Calu3 (cell line): ENCODE measurements at regions of chr1 and their contacts with region 1.

Region 1: DNA sequence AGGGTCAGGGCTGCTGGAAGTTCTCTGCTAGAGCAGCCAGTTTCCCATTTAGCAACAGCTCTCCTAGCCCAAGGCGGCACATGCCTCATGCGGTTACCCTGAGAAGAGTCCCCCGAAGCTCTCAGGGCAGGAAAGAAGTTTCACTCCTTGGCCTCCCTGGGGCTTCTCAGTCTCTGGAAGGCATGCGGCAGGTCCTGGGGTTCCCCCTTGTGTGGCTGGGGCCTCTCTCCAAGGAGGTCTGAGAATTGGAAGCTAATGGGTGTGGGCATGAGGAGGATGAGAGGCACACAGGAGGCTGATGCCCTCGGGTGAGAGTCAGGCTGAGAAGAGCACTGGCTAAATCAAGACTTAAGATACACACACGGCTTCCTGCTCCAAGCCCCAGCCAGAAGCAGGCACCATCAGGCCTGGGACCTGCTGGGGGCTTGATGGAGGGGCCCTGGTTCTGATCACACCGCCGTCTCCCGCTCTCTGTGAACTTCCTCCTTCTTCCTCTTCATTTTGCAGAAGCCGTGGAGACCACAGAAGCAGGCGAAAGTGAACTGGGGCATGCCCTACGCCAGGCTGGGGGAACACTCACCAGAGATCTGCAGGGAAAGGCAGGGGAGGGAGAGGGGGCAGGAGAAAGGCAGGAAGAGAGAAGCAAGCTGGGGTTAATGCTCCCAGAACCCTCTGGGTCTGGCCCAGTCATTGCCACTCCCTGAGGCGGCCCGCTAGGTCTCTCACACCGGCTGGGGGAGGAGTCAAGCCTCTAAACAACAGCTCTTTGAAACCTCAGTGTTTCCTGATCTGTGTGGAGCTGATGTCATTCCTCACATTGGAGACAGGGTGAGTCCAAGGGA is 15.1 kb downstream of the BLACAT1 start:
- DNase-seq: peak; percentile 96
- H3K4me3 Mint-ChIP-seq: peak overlapping the region; percentile 36
- H3K27ac Mint-ChIP-seq: peak overlapping the region; percentile 93
- H3K4me1 Mint-ChIP-seq: peaks cover 63% of the 10 kb centered on the region
- H3K27me3 Mint-ChIP-seq: no peaks in the 10 kb centered on the region
- CTCF ChIP-seq: no peak

Region 2: GRCh38 chr1:205456868-205457745 is 16.4 kb after region 1 on chr1:
- CTCF ChIA-PET with region 1: interaction called, 10 read pairs
- intact Hi-C with region 1: no loop called
- DNase-seq: peak; percentile 43
- H3K4me3 Mint-ChIP-seq: peak overlapping the region; percentile 7
- H3K27ac Mint-ChIP-seq: no peak overlapping the region
- H3K4me1 Mint-ChIP-seq: peaks cover 17% of the 10 kb centered on the region
- H3K27me3 Mint-ChIP-seq: peaks cover 81% of the 10 kb centered on the region
- CTCF ChIP-seq: no peak

Region 3: GRCh38 chr1:205470131-205470530 is 29.4 kb after region 1 on chr1:
- CTCF ChIA-PET with region 1: interaction called, 8 read pairs
- intact Hi-C with region 1: loop called (anchors 2 kb)
- DNase-seq: peak; percentile 49
- H3K4me3 Mint-ChIP-seq: no peak overlapping the region
- H3K27ac Mint-ChIP-seq: no peak overlapping the region
- H3K4me1 Mint-ChIP-seq: no peaks in the 10 kb centered on the region
- H3K27me3 Mint-ChIP-seq: peaks cover 28% of the 10 kb centered on the region
- CTCF ChIP-seq: no peak

Region 4: DNA sequence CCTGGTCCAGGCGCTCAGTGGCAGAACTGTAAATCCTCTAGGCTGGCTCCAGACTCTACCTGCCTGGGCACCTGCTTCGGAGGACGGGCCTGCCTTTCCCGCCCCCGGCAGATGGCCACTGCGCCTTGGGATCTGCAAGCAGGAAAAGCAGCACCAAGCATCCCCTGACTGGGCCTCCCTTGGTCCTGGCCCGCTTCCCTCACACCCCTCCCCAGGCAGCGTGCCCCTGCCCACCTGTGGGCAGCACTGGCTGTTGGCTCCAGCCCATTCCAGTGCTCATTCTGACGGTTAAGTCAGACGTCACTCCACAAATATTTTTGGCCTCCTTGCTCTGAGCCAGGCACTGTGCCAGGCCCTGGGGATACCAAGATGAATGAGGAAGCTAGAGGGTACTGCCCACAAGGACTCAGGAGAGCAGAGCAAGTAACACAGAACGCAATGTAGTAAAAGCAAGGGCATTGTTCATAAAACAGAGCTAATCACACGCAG is 37.1 kb after region 1 on chr1:
- CTCF ChIA-PET with region 1: interaction called, 20 read pairs
- intact Hi-C with region 1: no loop called
- DNase-seq: peak; percentile 96
- H3K4me3 Mint-ChIP-seq: peak overlapping the region; percentile 29
- H3K27ac Mint-ChIP-seq: peak overlapping the region; percentile 68
- H3K4me1 Mint-ChIP-seq: peaks cover 30% of the 10 kb centered on the region
- H3K27me3 Mint-ChIP-seq: peaks cover 44% of the 10 kb centered on the region
- CTCF ChIP-seq: no peak

Region 5: DNA sequence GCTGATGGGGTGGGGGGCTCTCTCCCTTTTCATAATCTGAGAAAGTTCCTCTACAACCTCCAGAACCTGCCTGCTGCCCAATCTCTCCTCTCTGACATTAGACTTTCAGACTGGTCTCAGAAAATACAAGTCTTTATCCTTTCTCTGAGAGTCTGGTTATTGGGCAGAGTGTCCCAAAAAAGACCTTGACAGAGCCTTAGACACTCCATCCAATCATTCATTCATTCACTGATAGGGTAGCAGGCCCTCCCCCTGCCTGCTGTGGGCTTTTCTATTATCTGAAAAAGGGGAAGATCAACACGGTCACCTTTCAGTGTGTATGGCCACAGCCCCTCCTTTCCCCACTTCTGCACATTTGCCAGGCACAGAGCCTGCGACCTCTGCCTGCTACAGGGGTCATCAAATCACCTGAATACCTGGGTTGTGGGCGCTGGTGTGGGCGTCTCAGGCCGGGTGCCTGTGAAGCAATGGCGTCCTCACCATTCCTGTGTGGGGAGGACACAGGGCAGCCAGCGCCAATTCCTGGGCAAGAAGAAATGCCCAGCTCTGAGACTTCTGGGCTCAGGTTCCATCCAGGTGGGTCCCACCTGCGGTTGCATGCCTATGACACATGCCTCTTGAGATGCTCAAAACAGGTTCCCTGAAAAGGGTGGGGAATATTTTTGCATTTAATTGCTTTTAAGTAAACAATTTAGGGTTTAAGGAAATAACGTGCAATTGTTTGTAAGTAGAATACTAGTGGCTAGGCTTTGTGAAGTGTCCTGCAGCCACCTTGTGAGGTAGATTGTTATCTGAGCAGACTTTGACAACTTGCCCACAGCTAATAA is 138.3 kb after region 1 on chr1:
- CTCF ChIA-PET with region 1: no interaction called
- intact Hi-C with region 1: no loop called
- DNase-seq: peak; percentile 50
- H3K4me3 Mint-ChIP-seq: no peak overlapping the region
- H3K27ac Mint-ChIP-seq: no peak overlapping the region
- H3K4me1 Mint-ChIP-seq: peaks cover 43% of the 10 kb centered on the region
- H3K27me3 Mint-ChIP-seq: peaks cover 19% of the 10 kb centered on the region
- CTCF ChIP-seq: no peak